Activated CD4-positive, alpha-beta T cell treated with anti-CD3 and anti-CD28 coated beads for 36 hours (primary cell): ENCODE measurements at regions of chr16 and their contacts with region 1.

Region 1: DNA sequence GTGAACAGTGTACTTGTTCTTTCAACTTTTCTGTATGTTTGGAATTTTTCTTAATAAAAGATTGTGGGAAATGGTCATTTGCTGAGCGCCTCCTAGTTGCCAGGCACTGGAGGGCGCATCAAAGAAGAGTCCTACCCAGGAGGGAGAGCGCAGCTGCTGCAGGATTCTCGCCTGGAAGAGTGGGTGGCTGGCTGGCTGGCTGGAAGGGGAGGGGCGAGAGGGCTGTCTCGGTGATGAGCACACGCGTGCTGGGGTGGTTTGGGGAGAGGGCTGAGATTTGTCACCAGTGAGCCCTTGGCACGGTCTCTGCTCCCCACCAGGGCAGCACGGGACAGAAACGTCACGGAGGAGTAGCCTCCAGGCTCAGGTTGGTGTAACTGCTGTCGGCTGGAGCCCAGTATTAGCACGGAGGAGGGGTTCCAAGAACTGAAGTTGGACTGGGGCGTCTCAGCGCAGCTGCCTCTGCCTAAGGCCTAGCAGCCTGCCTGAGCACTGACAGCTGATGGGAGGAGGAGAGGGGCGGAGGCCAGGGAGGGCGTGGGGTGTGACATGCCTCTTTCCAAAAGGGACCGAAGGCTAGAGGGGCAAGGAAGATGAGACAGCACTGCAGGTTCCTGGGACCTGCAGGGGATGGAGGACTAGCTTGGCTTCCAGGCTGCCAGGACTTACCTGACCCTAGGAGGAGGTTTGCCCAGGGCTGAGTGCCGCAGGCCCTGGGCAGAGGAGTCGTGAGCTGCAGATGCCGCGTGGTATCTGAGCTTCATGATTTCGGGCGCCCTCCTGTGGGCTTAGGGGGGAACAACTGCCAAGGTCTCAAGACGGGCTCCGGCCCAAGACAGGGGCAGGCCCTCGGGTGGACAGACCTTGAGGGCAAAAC is 5.7 kb downstream of the LDHD start:
- DNase-seq: peak; percentile 93
- ATAC-seq: peak; percentile 67
- H3K4me3 Mint-ChIP-seq: peak overlapping the region; percentile 84
- H3K27ac Mint-ChIP-seq: peak overlapping the region; percentile 92
- H3K4me1 Mint-ChIP-seq: peaks cover 63% of the 10 kb centered on the region
- H3K27me3 Mint-ChIP-seq: peaks cover 6% of the 10 kb centered on the region

Region 2: DNA sequence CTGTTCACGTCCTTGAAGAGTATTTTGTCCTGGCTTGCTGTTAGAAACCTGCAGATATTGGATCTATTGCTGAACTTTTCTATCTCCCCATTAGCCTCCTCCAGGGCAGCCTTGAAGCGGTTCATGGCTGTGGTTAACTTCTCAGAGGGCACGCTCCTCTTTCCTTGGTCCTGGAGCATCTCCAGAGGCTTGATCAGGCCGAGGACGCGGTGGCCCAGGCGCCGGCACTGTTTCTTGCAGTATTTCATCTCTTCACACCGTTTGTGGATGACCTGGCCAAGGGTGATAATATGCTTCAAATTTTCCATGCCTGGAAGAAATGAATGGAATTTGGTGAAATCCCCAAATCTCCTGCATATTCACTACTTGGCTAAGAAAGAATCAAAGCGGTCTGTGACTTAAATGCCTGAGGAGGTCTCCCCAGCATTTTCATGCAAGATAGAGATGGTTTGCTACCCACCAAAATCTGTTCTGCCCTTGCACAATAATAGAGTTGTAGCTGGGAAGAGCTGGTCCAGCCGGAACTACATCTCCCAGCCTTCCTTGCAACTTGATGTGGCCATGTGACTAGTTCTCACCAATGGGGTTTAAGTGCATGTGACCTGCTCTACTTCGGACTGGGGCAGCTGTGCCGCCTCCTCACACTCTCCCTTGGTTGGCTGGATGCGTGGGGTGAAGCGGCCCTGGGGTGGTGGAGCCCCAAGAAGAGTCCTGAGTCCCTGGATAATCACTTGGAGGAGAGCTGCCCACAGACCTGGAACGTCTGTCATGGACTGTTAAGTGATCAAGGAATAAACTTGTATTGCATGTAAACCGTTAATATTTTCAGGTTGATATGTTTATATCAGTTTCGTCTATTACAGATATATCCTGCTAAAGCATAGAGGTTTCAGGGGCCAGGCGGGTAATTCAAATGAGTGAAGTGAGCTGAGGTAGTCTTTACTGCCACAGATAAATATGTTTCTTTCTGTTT is 415.1 kb before region 1 on chr16:
- CTCF ChIA-PET with region 1: no interaction called
- POLR2A ChIA-PET with region 1: no interaction called
- intact Hi-C with region 1: loop called (anchors 2 to 10 kb)
- DNase-seq: peak; percentile 78
- ATAC-seq: peak; percentile 79
- H3K4me3 Mint-ChIP-seq: peak overlapping the region; percentile 63
- H3K27ac Mint-ChIP-seq: peak overlapping the region; percentile 60
- H3K4me1 Mint-ChIP-seq: peaks cover 45% of the 10 kb centered on the region
- H3K27me3 Mint-ChIP-seq: no peaks in the 10 kb centered on the region

Region 3: DNA sequence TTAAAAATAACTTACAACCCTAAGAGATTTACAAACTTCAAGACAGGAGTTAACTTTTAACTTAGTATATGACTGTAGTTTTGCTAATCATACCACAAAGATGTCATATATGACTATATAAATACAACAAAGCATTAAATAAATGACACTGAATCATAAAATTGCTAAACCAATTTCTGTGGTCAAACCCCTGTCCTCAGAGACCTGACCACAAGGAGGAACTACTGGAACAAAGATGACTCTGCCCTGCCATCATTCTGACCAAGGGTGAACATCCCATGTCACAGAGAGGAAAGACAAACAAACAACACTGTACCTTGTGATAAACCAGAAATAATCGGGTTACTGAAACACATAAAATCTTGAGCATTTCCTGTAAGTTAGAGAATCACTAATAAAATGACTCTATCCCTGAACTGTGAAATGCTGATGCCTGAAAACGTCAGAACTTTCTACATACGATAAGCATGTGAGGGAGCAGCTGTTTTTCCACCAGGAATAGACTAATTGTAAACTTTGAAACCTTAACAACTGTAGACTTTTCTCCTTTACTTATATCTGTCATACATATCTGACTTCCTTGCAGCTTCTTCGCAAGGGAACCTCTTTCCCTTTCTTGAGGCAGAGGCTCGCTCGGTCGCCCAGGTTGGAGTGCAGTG is 173.8 kb before region 1 on chr16:
- CTCF ChIA-PET with region 1: no interaction called
- POLR2A ChIA-PET with region 1: interaction called, 10 read pairs
- intact Hi-C with region 1: loop called in 1 of 2 experiments (anchors 5 kb)
- DNase-seq: peak; percentile 35
- ATAC-seq: peak; percentile 88
- H3K4me3 Mint-ChIP-seq: no peak overlapping the region
- H3K27ac Mint-ChIP-seq: no peak overlapping the region
- H3K4me1 Mint-ChIP-seq: peaks cover 4% of the 10 kb centered on the region
- H3K27me3 Mint-ChIP-seq: no peaks in the 10 kb centered on the region

Region 4: GRCh38 chr16:75003910-75004309 is 107.0 kb before region 1 on chr16:
- CTCF ChIA-PET with region 1: interaction called, 114 read pairs
- POLR2A ChIA-PET with region 1: interaction called, 7 read pairs
- intact Hi-C with region 1: no loop called
- DNase-seq: no peak
- ATAC-seq: no peak
- H3K4me3 Mint-ChIP-seq: no peak overlapping the region
- H3K27ac Mint-ChIP-seq: no peak overlapping the region
- H3K4me1 Mint-ChIP-seq: peaks cover 53% of the 10 kb centered on the region
- H3K27me3 Mint-ChIP-seq: peaks cover 4% of the 10 kb centered on the region

Region 5: GRCh38 chr16:75074920-75075687 is 35.8 kb before region 1 on chr16:
- CTCF ChIA-PET with region 1: interaction called, 4 read pairs
- POLR2A ChIA-PET with region 1: interaction called, 4 read pairs
- intact Hi-C with region 1: loop called (anchors 1 kb)
- DNase-seq: peak; percentile 89
- ATAC-seq: peak; percentile 92
- H3K4me3 Mint-ChIP-seq: peak overlapping the region; percentile 54
- H3K27ac Mint-ChIP-seq: peak overlapping the region; percentile 97
- H3K4me1 Mint-ChIP-seq: peaks cover 62% of the 10 kb centered on the region
- H3K27me3 Mint-ChIP-seq: no peaks in the 10 kb centered on the region

Region 6: GRCh38 chr16:75121949-75122568 is 11.2 kb after region 1 on chr16:
- CTCF ChIA-PET with region 1: interaction called, 11 read pairs
- POLR2A ChIA-PET with region 1: no interaction called
- intact Hi-C with region 1: no loop called
- DNase-seq: no peak
- ATAC-seq: no peak
- H3K4me3 Mint-ChIP-seq: no peak overlapping the region
- H3K27ac Mint-ChIP-seq: no peak overlapping the region
- H3K4me1 Mint-ChIP-seq: no peaks in the 10 kb centered on the region
- H3K27me3 Mint-ChIP-seq: no peaks in the 10 kb centered on the region

Region 7: GRCh38 chr16:75377729-75378386 is 267.0 kb after region 1 on chr16:
- CTCF ChIA-PET with region 1: no interaction called
- POLR2A ChIA-PET with region 1: no interaction called
- intact Hi-C with region 1: no loop called
- DNase-seq: no peak
- ATAC-seq: no peak
- H3K4me3 Mint-ChIP-seq: no peak overlapping the region
- H3K27ac Mint-ChIP-seq: no peak overlapping the region
- H3K4me1 Mint-ChIP-seq: peaks cover 48% of the 10 kb centered on the region
- H3K27me3 Mint-ChIP-seq: peaks cover 12% of the 10 kb centered on the region